GM10248 (cell line): ENCODE measurements at regions of chr4 and their contacts with region 1.

Region 1: GRCh38 chr4:152500800-152501434 is 35.0 kb downstream of the FBXW7 start:
- DNase-seq: peak; percentile 46
- CTCF ChIP-seq: peak; percentile 83

Region 2: GRCh38 chr4:152485726-152486276 is 15.1 kb before region 1 on chr4:
- CTCF ChIA-PET with region 1: interaction called, 51 read pairs
- POLR2A ChIA-PET with region 1: no interaction called
- DNase-seq: peak; percentile 37
- CTCF ChIP-seq: no peak

Region 3: DNA sequence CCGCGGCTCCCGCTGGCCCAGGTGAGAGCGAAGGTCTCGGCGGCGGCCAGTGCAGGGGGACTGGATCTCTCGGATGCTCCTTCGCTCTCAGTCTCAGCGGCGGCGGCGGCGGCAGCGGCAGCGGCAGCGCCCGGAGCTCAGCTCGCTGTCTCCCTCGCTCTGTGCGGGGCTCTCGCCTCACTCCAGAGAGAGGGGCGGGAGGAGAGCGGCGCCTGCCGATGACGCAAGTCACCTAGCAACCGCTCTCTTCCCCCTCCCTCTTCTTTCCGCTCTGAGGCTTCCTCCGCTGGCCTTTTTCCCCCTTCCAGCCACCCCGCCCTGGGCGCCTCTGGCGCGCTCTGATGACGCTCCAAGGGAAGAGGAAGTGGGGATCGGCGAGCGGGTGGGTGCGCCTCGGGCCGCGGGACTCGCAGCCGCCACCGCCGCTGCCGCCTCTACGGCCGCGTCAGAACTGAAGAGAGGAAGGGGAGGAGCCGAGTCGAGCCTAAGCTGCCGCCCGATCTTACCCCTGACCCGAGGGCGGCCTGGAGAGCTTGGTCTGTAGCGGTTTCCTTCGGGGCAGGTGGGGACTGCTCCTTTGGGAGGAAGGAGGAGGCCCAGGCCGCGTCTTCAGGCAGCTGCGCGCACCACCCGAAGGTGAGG is 35.1 kb after region 1 on chr4 and contains the start of gene FBXW7:
- CTCF ChIA-PET with region 1: interaction called, 18 read pairs
- POLR2A ChIA-PET with region 1: interaction called, 3 read pairs
- DNase-seq: peak; percentile 96
- CTCF ChIP-seq: no peak

Region 4: DNA sequence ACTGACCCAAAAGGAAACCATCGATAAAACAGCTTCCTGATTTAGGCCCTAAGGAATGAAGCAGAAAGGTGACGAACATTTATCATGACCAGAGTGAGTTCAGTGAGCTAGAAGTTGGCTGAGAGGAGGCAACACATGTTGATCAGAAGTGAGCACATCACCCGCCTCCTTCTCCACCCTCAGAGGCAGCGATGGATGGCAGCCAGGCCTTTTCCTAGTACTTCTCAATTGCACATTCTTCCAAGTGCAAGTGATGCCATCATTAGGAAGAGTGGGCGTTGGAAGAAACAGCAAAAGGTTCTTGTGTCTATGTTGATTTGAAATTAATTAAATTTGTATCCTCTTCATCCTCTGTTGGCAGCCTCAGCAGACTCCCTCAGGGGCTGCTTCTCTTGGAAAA is 127.2 kb after region 1 on chr4:
- CTCF ChIA-PET with region 1: interaction called, 8 read pairs
- POLR2A ChIA-PET with region 1: interaction called, 11 read pairs
- DNase-seq: no peak
- CTCF ChIP-seq: no peak

Region 5: DNA sequence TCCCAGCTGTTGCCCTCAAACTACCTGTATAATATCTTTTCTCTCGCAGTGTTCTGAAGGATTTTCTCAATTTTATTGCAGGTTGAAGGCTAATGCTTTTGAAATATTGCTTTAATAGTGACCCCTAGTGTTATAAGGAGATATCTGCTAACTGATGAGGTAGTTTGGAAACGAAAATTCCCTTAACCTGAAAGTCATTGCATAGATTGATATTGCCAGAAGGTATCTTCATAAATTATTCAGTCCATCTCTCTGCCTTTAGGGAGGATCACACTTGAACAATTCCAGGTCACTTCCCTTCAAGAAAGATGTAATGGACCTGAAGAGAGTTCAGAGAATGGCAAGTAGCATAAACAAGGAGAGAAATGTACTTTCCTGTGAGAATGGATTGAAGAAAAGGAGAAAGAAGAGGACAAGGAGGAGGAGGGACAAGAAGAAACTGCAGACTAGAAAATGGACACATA is 234.5 kb after region 1 on chr4:
- CTCF ChIA-PET with region 1: interaction called, 25 read pairs
- POLR2A ChIA-PET with region 1: no interaction called
- DNase-seq: peak; percentile 53
- CTCF ChIP-seq: peak; percentile 47

Region 6: DNA sequence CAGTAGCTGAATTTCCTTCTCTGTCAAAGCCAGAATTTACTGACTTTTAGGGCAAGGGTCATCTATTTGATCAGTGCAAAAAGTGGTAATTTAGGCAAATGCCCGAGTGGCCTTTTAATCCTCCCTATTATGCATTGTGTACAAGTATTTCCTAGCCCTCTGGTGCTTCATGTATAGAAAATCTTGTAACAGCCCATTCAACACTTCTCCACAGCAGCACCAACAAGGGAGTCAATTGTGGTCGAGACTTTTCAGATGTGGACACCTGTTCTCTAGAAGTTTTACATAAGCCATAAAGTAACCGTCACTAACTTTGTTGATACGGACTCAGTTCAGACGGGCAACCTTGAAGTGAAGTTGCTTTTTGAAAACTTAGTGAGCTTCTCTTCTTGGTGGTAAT is 384.3 kb after region 1 on chr4:
- CTCF ChIA-PET with region 1: no interaction called
- POLR2A ChIA-PET with region 1: no interaction called
- DNase-seq: no peak
- CTCF ChIP-seq: no peak